Activated CD8-positive, alpha-beta T cell treated with anti-CD3 and anti-CD28 coated beads for 36 hours (primary cell): ENCODE measurements at regions of chr14 and their contacts with region 1.

Region 1: GRCh38 chr14:103808403-103809001 is 38.9 kb downstream of the PPP1R13B start:
- DNase-seq: peak; percentile 77
- ATAC-seq: peak; percentile 85
- H3K4me3 Mint-ChIP-seq: no peak overlapping the region
- H3K27ac Mint-ChIP-seq: no peak overlapping the region
- H3K4me1 Mint-ChIP-seq: peaks cover 7% of the 10 kb centered on the region
- H3K27me3 Mint-ChIP-seq: no peaks in the 10 kb centered on the region
- CTCF ChIP-seq: peak; percentile 92

Region 2: DNA sequence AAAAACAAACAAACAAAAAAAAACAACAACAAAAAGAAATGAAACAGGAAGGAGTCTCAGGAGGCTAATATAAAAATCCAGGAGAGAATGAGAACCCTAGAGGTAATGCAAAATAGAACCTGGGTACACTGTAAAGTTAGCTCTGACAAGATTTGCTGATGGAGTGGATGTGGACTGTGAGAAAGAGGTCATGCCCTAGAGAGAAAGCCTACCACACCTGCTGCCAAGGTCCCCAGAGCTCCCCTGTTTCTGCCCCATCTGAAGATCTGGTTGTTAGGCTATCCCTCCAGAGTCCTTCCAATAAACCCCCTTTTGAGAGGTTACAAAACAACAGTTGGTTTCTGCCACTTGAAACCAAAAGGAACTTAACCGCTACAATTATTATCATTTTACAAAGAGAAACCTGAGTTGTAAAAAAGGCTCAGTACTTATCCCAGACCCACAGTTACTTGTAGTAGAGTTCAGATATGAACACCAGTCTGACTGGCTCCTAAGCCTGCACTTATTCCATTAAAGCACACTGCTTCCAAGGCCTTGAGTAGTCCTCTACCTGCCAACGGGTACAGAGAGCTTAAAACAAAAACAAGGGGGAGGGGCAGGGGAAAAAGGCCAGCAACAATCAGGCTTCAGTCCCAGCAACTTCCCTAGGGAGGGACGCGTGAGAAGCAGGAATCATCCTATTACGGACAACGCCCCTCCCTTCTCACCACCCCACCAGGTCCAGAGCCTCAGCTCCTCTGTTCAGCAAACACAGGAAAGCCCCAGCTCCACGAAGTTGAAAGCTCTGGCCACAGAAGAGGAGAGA is 11.2 kb after region 1 on chr14:
- CTCF ChIA-PET with region 1: interaction called, 27 read pairs
- POLR2A ChIA-PET with region 1: no interaction called
- intact Hi-C with region 1: no loop called
- DNase-seq: no peak
- ATAC-seq: peak; percentile 30
- H3K4me3 Mint-ChIP-seq: no peak overlapping the region
- H3K27ac Mint-ChIP-seq: no peak overlapping the region
- H3K4me1 Mint-ChIP-seq: peaks cover 40% of the 10 kb centered on the region
- H3K27me3 Mint-ChIP-seq: no peaks in the 10 kb centered on the region
- CTCF ChIP-seq: no peak

Region 3: DNA sequence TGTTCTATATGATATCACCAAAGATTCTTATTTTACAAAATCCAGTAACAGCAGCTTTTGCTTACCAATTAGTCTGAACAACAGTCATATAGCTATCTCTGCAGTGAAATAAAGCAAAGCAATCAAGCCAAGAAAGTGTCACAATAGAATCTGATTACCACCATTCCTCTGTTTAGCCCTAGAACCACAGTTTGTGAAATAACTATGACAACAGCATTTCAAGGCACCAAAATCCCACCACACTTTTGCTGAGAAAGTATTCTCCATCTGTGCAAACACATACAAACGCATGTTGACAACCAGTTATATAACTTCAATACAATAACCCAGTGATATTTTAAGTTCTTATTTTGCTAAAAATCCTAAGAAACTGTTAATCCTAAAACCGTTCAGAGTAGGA is 31.5 kb after region 1 on chr14:
- CTCF ChIA-PET with region 1: interaction called, 14 read pairs
- POLR2A ChIA-PET with region 1: no interaction called
- intact Hi-C with region 1: no loop called
- DNase-seq: no peak
- ATAC-seq: no peak
- H3K4me3 Mint-ChIP-seq: no peak overlapping the region
- H3K27ac Mint-ChIP-seq: no peak overlapping the region
- H3K4me1 Mint-ChIP-seq: peaks cover 14% of the 10 kb centered on the region
- H3K27me3 Mint-ChIP-seq: no peaks in the 10 kb centered on the region
- CTCF ChIP-seq: no peak

Region 4: GRCh38 chr14:103910262-103910935 is 101.9 kb after region 1 on chr14:
- CTCF ChIA-PET with region 1: interaction called, 56 read pairs
- POLR2A ChIA-PET with region 1: no interaction called
- intact Hi-C with region 1: loop called (anchors 2 kb)
- DNase-seq: peak; percentile 84
- ATAC-seq: peak; percentile 90
- H3K4me3 Mint-ChIP-seq: peak overlapping the region; percentile 22
- H3K27ac Mint-ChIP-seq: peak overlapping the region; percentile 71
- H3K4me1 Mint-ChIP-seq: peaks cover 24% of the 10 kb centered on the region
- H3K27me3 Mint-ChIP-seq: no peaks in the 10 kb centered on the region
- CTCF ChIP-seq: peak; percentile 83

Region 5: DNA sequence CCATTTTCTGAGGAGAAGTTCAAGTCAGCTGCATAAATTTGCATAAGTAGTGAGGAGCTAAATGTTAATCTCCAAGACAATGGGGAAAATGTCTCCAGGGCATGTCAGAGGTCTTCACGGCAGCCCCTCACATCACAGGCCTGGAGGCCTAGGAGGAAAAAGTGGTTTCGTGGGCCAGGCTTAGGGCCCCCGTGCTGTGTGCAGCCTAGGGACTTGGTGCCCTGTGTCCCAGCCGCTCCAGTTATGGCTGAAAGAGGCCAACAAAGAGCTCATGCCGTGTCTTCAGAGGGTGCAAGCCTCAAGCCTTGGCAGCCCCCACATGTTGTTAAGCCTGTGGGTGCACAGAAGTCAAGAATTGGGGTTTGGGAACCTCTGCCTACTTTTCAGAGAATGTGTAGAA is 175.7 kb after region 1 on chr14:
- CTCF ChIA-PET with region 1: interaction called, 23 read pairs
- POLR2A ChIA-PET with region 1: no interaction called
- intact Hi-C with region 1: no loop called
- DNase-seq: no peak
- ATAC-seq: no peak
- H3K4me3 Mint-ChIP-seq: no peak overlapping the region
- H3K27ac Mint-ChIP-seq: no peak overlapping the region
- H3K4me1 Mint-ChIP-seq: no peaks in the 10 kb centered on the region
- H3K27me3 Mint-ChIP-seq: peaks cover 12% of the 10 kb centered on the region
- CTCF ChIP-seq: no peak

Region 6: DNA sequence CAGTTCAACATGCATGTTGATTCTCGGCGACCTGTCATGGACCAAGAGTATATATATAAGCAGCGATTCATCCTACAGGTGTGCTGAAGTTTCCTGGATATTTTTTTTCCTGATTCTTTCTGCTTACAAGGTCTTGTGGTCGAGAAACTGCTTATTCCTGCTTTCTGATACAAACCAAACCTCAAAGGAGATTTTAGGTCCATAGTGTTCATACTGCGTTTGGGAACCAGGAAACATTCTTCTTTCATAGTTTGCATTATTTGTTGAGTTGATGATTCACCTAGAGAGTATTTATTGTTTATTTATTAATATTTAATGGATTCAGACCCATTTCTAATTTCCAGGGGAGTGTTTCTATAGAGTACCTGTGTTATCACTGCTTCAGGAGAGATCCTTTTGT is 206.3 kb after region 1 on chr14:
- CTCF ChIA-PET with region 1: no interaction called
- POLR2A ChIA-PET with region 1: no interaction called
- intact Hi-C with region 1: no loop called
- DNase-seq: no peak
- ATAC-seq: no peak
- H3K4me3 Mint-ChIP-seq: no peak overlapping the region
- H3K27ac Mint-ChIP-seq: no peak overlapping the region
- H3K4me1 Mint-ChIP-seq: no peaks in the 10 kb centered on the region
- H3K27me3 Mint-ChIP-seq: peaks cover 4% of the 10 kb centered on the region
- CTCF ChIP-seq: no peak